Right ventricle myocardium inferior (tissue), 1 donor: ENCODE measurements at regions of chr6 and their contacts with region 1.

Region 1: DNA sequence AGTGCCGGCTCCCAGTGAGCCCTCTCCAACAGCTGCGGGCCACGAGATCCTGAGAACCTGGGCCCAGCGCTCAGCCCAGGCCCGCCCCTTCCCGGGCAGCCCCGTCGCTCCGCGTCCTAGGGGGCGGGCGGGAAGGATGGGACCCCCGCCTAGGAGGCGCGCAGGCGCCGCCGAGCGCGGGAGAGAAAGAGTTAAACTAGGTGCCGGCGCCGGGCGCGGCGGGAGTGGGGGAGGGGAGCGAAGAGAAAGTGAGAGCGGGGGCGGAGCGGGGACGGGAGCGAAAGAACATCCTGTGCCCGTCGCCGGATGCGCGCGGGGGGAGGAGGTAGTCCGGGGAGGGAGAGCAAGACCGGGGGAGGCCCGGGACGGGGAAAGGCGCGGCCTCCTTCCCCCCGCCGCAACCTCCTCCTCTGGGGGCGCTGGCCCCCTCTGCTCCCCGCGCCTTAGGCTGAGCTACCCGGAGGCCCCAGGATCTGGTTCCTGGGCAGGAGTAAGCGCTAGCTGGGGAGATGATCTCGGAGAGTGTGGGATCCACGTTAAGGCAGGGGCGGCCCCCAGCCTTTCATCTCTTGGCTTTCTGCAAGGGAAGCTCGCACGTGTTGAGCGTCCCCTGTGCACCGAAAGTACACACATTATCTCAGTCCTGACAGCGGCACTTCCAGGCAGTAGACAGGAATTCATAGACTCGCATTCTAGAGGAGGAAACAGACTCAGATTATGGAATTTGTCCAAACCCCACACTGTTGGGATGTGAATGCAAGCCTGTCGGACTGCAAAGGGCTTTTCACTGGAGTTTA is 4.9 kb upstream of the ARMC12 start:
- DNase-seq: peak; percentile 99
- ATAC-seq: peak; percentile 73

Region 2: DNA sequence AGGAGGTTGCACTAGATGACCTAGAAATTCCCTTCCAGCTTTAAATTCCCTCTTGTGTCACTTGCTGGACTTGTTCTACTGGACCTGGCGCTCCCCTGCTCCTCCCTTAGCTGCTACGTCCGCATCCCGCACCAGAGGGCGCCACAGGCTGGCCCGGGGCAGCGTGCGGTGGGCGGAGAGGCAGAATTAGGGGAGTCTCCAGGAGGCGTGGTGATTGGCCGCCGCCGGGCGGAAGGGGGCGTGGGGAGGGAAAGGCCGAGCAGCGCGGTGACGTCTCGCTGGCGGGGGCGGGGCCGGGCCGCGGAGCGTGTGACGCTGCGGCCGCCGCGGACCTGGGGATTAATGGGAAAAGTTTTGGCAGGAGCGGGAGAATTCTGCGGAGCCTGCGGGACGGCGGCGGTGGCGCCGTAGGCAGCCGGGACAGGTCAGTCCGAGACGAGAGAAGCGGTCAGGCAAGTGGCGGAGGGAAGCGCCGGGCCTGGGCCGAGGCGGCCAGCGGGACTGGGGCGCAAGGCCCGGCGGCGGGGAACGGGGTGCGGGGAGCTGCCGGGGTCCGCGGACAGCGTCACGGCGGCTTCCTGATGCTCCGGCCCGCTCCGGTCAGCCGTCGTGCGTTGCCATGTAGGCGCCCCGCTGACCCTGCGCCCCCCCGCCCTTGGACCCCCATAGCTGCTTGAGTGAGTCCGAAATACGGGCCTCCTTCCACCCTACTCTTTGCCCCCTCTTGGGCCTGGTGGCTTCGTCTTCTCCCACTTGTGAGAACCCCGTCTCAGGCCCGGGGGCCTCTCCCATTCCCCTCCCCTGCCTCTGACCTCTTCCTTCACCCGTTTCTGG is 389.5 kb before region 1 on chr6 and contains the start of gene PPARD:
- intact Hi-C with region 1: loop called (anchors 5 kb)
- DNase-seq: peak; percentile 99
- ATAC-seq: peak; percentile 99
- total RNA-seq, gene PPARD: 14.7 TPM

Region 3: DNA sequence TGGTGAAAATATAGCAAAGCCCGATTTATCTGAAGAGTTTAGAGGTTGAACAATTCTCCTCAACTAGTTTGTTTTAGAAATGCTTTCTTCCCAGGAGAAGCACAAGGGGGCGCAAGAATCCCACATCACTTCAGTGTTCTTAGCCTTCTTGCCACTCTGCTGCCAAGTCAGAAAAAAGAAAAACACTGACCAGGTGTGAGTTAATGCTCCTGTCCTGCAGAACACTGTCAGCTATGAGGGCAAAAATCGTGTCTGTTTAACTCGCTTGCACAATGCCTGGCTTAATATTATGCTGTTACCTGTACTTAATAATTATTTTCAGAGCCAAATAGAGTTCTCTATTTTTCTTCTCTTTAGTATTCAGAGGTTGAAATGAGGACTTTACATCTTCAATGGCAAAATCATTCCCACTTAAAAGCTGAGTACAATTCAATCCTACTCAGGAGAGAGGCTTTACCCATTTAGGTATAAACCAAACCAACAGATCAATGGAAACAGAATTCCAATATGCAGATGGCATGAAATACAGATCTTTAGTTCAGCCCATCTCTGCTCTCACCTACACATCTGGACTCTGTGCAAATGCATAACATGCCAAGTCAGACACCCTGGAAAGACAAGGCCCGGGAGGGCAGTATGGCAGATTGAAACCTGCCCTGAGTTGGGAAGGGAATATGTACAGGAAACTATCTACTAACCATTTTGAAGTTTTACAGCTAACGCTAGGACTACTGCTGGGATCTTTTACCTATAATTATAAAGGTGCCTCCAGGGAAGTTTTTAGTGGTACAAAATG is 147.8 kb before region 1 on chr6:
- intact Hi-C with region 1: loop called (anchors 1 kb)
- DNase-seq: no peak
- ATAC-seq: peak; percentile 69

Region 4: DNA sequence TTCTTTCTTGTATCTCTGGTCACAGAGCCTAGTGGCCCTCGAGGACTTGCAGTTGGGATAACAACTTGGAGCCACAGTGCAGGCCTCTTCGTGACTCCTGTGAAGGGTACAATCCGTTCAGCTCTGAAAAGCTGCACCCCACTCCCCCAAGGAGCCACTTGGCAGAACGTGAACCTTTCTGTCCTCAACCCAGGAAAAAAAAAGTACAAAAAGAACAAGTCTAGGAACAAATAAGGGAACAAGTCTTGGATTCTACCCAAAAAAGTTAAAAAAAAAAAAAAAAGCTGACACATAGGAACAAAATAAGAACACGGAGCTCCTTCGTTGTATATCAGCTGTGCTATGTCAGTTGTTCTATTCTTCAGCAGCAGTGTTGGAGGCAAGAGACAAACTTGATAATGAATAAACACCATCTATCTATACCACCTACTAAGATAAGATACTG is 141.3 kb before region 1 on chr6:
- intact Hi-C with region 1: loop called (anchors 1 kb)
- DNase-seq: peak; percentile 82
- ATAC-seq: peak; percentile 94

Region 5: GRCh38 chr6:35601331-35602132 is 130.4 kb before region 1 on chr6:
- intact Hi-C with region 1: loop called (anchors 1 kb)
- DNase-seq: no peak
- ATAC-seq: peak; percentile 91

Region 6: GRCh38 chr6:35688581-35689322 is 43.2 kb before region 1 on chr6 and contains the start of gene FKBP5:
- intact Hi-C with region 1: loop called (anchors 1 kb)
- DNase-seq: peak; percentile 99
- ATAC-seq: peak; percentile 91
- total RNA-seq, gene FKBP5: 101 TPM

Region 7: DNA sequence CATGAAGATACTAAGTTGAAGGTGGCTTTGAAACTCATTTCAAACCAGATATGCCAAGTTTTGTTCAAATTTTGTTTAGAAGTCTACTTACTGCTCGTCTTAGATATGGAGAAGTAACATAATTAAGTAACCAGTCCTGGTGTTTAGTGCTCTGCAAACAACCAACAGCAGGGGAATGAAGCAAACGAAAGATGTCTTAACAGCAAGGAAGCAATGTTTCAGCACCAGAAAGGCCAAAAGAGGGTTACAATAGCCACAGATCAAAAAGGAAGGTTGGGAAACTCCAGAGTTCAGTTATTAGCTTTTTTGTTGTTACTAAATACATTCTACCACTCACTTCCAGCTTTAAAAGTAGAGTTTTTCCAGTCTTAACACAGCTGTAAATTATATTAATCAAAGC is 118.3 kb after region 1 on chr6:
- intact Hi-C with region 1: no loop called
- DNase-seq: no peak
- ATAC-seq: no peak